Breast epithelium (tissue), 4 donors: ENCODE measurements at regions of chr13 and their contacts with region 1.

Region 1: GRCh38 chr13:72458701-72459100 is 268.7 kb downstream of the MZT1 start:
- DNase-seq: no peak
- H3K4me3 ChIP-seq: no peak overlapping the region
- H3K27ac ChIP-seq: no peak overlapping the region
- H3K4me1 ChIP-seq: no peaks in the 10 kb centered on the region
- H3K27me3 ChIP-seq: no peaks in the 10 kb centered on the region
- CTCF ChIP-seq: no peak
- POLR2A ChIP-seq: no peak

Region 2: DNA sequence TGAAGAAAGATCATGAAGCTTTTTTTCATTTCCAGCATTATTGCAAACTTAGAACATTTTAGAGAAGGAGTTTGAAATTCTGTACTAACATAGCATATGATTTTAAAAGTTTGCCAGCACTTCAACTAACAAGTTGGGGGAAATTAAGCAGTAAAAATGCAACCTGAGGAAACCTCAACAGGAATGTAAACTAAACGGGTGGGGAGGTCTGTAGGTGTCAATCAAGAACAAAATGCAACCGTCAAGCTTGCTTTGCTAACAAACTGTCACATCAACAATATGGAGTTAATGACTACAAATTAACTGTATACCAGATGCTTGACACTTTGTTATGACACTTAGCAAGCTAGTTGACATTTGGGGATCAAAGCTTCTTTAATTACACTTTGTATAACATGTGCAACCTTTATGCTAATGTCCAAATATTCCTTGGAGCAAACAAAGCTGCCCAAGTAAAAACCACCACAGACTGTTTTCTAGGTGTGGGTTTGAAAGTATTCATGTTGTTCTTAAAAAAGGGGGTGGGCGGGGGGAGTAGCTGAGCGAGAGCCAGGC is 643.8 kb before region 1 on chr13:
- intact Hi-C with region 1: no loop called
- DNase-seq: no peak
- H3K4me3 ChIP-seq: no peak overlapping the region
- H3K27ac ChIP-seq: no peak overlapping the region
- H3K4me1 ChIP-seq: no peaks in the 10 kb centered on the region
- H3K27me3 ChIP-seq: no peaks in the 10 kb centered on the region
- CTCF ChIP-seq: no peak
- POLR2A ChIP-seq: no peak

Region 3: GRCh38 chr13:72469906-72470305 is 11.2 kb after region 1 on chr13:
- intact Hi-C with region 1: loop called (anchors 1 kb)
- DNase-seq: no peak
- H3K4me3 ChIP-seq: no peak overlapping the region
- H3K27ac ChIP-seq: no peak overlapping the region
- H3K4me1 ChIP-seq: no peaks in the 10 kb centered on the region
- H3K27me3 ChIP-seq: no peaks in the 10 kb centered on the region
- CTCF ChIP-seq: no peak
- POLR2A ChIP-seq: no peak

Region 4: GRCh38 chr13:72622546-72622945 is 163.8 kb after region 1 on chr13:
- intact Hi-C with region 1: no loop called
- DNase-seq: no peak
- H3K4me3 ChIP-seq: no peak overlapping the region
- H3K27ac ChIP-seq: no peak overlapping the region
- H3K4me1 ChIP-seq: no peaks in the 10 kb centered on the region
- H3K27me3 ChIP-seq: no peaks in the 10 kb centered on the region
- CTCF ChIP-seq: no peak
- POLR2A ChIP-seq: no peak

Region 5: GRCh38 chr13:73481886-73482445 is 1023.3 kb after region 1 on chr13:
- intact Hi-C with region 1: no loop called
- DNase-seq: no peak
- H3K4me3 ChIP-seq: no peak overlapping the region
- H3K27ac ChIP-seq: no peak overlapping the region
- H3K4me1 ChIP-seq: no peaks in the 10 kb centered on the region
- H3K27me3 ChIP-seq: no peaks in the 10 kb centered on the region
- CTCF ChIP-seq: no peak
- POLR2A ChIP-seq: no peak